Panc1 (cell line): ENCODE measurements at regions of chr17 and their contacts with region 1.

Region 1: GRCh38 chr17:59427425-59427921 is 96.0 kb downstream of the YPEL2 start:
- DNase-seq: no peak
- ATAC-seq: no peak
- H3K4me3 ChIP-seq: no peak overlapping the region
- H3K27ac ChIP-seq: no peak overlapping the region
- H3K4me1 ChIP-seq: no peaks in the 10 kb centered on the region
- H3K27me3 ChIP-seq: no peaks in the 10 kb centered on the region
- CTCF ChIP-seq: no peak

Region 2: GRCh38 chr17:59533717-59534116 is 106.2 kb after region 1 on chr17:
- CTCF ChIA-PET with region 1: interaction called, 10 read pairs
- POLR2A ChIA-PET with region 1: no interaction called
- in situ Hi-C with region 1: no loop called
- intact Hi-C with region 1: no loop called
- DNase-seq: no peak
- ATAC-seq: no peak
- H3K4me3 ChIP-seq: no peak overlapping the region
- H3K27ac ChIP-seq: no peak overlapping the region
- H3K4me1 ChIP-seq: no peaks in the 10 kb centered on the region
- H3K27me3 ChIP-seq: no peaks in the 10 kb centered on the region
- CTCF ChIP-seq: no peak

Region 3: GRCh38 chr17:59547131-59547915 is 119.8 kb after region 1 on chr17:
- CTCF ChIA-PET with region 1: no interaction called
- POLR2A ChIA-PET with region 1: no interaction called
- in situ Hi-C with region 1: no loop called
- intact Hi-C with region 1: no loop called
- DNase-seq: no peak
- ATAC-seq: no peak
- H3K4me3 ChIP-seq: no peak overlapping the region
- H3K27ac ChIP-seq: no peak overlapping the region
- H3K4me1 ChIP-seq: no peaks in the 10 kb centered on the region
- H3K27me3 ChIP-seq: no peaks in the 10 kb centered on the region
- CTCF ChIP-seq: no peak

Region 4: GRCh38 chr17:59565171-59565969 is 137.9 kb after region 1 on chr17 and contains the start of gene DHX40:
- CTCF ChIA-PET with region 1: no interaction called
- POLR2A ChIA-PET with region 1: no interaction called
- in situ Hi-C with region 1: no loop called
- intact Hi-C with region 1: no loop called
- DNase-seq: peak; percentile 38
- ATAC-seq: peak; percentile 95
- H3K4me3 ChIP-seq: peak within 1 kb of the TSS; percentile 93 to 99
- H3K27ac ChIP-seq: peak within 1 kb of the TSS; percentile 71
- H3K4me1 ChIP-seq: peaks cover 6% of the 10 kb centered on the region
- H3K27me3 ChIP-seq: no peaks in the 10 kb centered on the region
- CTCF ChIP-seq: no peak
- total RNA-seq, gene DHX40: 16.2 TPM

Region 5: DNA sequence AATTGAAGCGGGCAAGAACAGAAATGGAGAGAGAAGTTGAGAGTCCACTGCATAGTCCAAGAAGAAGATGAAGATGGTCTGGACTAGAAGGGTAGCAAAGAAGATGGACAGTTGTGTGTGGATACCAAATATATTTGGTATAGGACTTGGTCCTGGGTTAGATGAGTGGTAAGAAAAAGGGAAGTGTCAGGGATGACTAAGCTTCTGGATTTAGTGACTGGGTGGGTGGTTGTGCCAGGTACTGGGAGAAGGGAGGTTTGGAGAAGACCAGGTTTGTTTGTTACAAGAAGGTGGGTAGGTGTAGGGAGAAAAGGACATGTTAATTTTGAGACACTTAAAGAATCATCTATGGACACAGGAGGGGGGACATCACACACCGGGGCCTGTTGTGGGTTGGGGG is 285.4 kb after region 1 on chr17:
- CTCF ChIA-PET with region 1: no interaction called
- POLR2A ChIA-PET with region 1: no interaction called
- in situ Hi-C with region 1: no loop called
- intact Hi-C with region 1: no loop called
- DNase-seq: no peak
- ATAC-seq: no peak
- H3K4me3 ChIP-seq: no peak overlapping the region
- H3K27ac ChIP-seq: no peak overlapping the region; the same call in 1 of the 2 replicates
- H3K4me1 ChIP-seq: peaks cover 29% of the 10 kb centered on the region
- H3K27me3 ChIP-seq: no peaks in the 10 kb centered on the region
- CTCF ChIP-seq: no peak